Vagina (tissue), 2 donors: ENCODE measurements at regions of chr1 and their contacts with region 1.

Region 1: GRCh38 chr1:44294588-44295007 is 60.5 kb downstream of the ERI3 start:
- DNase-seq: peak in 1 of 2 donors; percentile 88
- H3K4me3 ChIP-seq: no peak overlapping the region
- H3K27ac ChIP-seq: no peak overlapping the region
- H3K4me1 ChIP-seq: peaks cover 14% of the 10 kb centered on the region
- H3K27me3 ChIP-seq: no peaks in the 10 kb centered on the region
- CTCF ChIP-seq: peak in 2 of 3 experiments; percentile 22 to 42
- POLR2A ChIP-seq: no peak

Region 2: GRCh38 chr1:44220001-44220733 is 74.4 kb before region 1 on chr1:
- intact Hi-C with region 1: loop called (anchors 2 kb)
- DNase-seq: no peak
- H3K4me3 ChIP-seq: no peak overlapping the region
- H3K27ac ChIP-seq: no peak overlapping the region
- H3K4me1 ChIP-seq: no peaks in the 10 kb centered on the region
- H3K27me3 ChIP-seq: no peaks in the 10 kb centered on the region
- CTCF ChIP-seq: no peak
- POLR2A ChIP-seq: no peak